Activated CD4-positive, alpha-beta T cell treated with anti-CD3 and anti-CD28 coated beads for 36 hours (primary cell): ENCODE measurements at regions of chr1 and their contacts with region 1.

Region 1: GRCh38 chr1:52825868-52826267 is 16.7 kb upstream of the ZYG11A start:
- DNase-seq: no peak
- ATAC-seq: peak; percentile 36
- H3K4me3 Mint-ChIP-seq: no peak overlapping the region
- H3K27ac Mint-ChIP-seq: no peak overlapping the region
- H3K4me1 Mint-ChIP-seq: no peaks in the 10 kb centered on the region
- H3K27me3 Mint-ChIP-seq: no peaks in the 10 kb centered on the region

Region 2: DNA sequence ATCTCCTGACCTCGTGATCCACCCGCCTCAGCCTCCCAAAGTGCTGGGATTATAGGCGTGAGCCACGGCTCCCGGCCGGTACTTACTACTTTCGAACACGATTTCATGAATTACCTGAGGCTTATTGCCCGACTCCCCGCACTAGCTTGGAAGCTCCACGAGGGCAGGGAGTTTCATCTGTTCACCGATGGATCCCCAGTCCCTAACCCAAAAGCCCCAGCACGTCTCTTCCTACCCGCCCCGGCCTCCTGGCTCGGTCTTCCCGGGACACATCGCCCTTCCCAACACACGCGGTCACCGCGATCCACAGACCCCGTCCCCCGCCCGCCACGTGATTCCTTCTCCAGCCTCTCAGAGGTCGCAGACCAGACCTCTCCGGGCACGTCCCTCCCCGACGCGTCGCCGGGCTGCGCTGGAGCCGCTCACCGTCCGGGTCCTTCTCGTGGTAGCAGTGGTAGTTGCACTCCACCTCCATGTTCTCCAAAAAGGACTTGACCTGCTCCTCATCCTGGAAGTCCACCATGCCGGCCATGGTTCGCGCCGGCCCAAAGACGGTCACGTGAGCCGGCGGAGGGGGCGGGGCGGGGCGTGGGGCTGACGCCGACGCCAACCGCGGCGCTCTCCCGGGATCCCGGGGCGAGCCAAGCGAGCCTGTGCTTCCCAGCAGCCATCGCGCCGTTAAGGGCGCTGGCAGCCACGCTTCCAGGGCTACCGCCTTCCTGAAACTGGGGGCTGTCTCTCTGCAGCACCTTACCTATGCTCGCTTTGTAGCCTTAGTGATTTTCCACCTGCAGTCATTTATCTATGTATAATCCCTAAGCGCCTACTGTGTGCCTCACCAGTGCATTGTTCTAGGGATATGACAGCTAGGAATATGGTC is 127.8 kb before region 1 on chr1 and contains the start of gene COA7:
- CTCF ChIA-PET with region 1: interaction called, 3 read pairs
- POLR2A ChIA-PET with region 1: no interaction called
- intact Hi-C with region 1: loop called (anchors 1 to 10 kb)
- DNase-seq: peak; percentile 83
- ATAC-seq: peak; percentile 50
- H3K4me3 Mint-ChIP-seq: peak within 1 kb of the TSS; percentile 93
- H3K27ac Mint-ChIP-seq: peak within 1 kb of the TSS; percentile 89
- H3K4me1 Mint-ChIP-seq: peaks cover 23% of the 10 kb centered on the region
- H3K27me3 Mint-ChIP-seq: no peaks in the 10 kb centered on the region
- total RNA-seq, gene COA7: 11.0 to 17.2 TPM